ENCODE measurements at regions of chr15 and their contacts with region 1.

Region 1: GRCh38 chr15:59492389-59493377 is 54.7 kb downstream of the FAM81A start:
- DNase-seq: peak; percentile 55
- H3K4me3 ChIP-seq: no peak overlapping the region
- H3K27ac ChIP-seq: no peak overlapping the region
- H3K4me1 ChIP-seq: no peaks in the 10 kb centered on the region
- H3K27me3 ChIP-seq: no peaks in the 10 kb centered on the region
- CTCF ChIP-seq: peak; percentile 84 to 88

Region 2: DNA sequence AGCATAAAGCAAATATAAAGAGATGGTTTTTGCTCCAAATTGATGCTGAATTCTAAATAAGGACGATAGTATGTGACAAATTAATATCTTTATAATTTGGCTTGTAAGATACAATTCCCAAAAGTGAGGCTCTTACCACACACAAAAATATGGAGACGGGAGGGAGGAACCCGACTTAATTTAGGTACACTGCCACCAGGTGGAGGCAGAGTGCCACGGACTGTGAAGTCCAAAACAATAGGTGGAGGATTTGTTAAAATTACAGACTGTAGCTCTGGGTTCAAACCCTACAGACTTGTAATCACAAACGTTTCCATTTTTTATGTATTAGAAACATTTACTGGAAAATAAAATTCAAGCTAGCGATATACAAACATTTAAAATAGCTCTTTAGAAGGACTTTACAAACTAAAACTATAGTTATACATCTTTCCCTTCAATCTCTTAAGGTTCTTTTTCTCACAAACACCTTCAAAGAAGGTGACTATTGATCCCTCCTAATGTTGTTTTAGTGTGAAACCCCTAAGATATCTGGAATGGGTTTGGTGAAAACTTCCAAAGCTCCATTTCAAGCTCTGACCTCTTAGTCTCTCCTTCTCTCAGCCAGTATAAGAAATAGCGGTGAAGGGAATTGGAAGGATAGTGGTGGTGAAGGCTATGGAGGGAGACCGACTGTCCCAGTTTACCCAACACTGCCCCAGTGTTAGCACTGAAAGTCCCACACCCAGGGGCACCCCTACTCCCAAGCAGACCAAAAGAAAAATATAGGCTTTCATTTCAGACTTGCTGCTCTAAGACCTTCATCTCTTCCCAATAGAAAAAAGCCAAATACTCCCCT is 1264.8 kb before region 1 on chr15:
- CTCF ChIA-PET with region 1: no interaction called
- dilution Hi-C with region 1: no loop called
- in situ Hi-C with region 1: no loop called
- intact Hi-C with region 1: loop called (anchors 2 kb)
- DNase-seq: peak; percentile 57
- H3K4me3 ChIP-seq: no peak overlapping the region
- H3K27ac ChIP-seq: no peak overlapping the region
- H3K4me1 ChIP-seq: peaks cover 50% of the 10 kb centered on the region
- H3K27me3 ChIP-seq: no peaks in the 10 kb centered on the region
- CTCF ChIP-seq: peak; percentile 84 to 88

Region 3: DNA sequence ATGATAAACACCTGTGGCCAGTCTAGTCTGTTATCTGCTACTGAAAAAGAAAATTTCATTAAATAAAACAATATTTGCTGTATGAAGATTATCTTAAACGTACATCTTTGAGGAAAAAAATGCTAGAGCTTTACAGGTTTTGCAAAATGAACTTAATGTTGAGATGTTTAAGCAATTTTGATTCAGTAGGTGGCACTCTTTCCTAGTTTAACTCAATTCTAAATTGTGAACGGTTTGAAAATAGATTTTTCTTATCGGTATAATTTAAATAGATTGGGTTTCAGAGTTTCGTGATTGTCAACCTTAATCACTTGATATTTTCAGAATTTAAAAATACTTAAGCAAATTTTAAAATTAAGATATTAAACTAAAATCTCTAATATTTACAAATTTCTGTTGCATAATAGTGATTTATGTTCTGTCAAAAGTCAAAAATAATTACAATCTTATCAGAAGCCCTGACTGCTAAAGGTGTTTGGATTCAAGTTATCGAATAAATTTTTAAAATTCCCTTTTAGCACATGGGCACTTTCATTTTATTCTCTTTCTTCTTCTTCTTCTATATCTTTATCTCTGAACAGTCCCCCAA is 512.2 kb before region 1 on chr15:
- CTCF ChIA-PET with region 1: no interaction called
- dilution Hi-C with region 1: no loop called
- in situ Hi-C with region 1: loop called (anchors 10 kb)
- intact Hi-C with region 1: loop called (anchors 1 kb)
- DNase-seq: no peak
- H3K4me3 ChIP-seq: no peak overlapping the region
- H3K27ac ChIP-seq: no peak overlapping the region
- H3K4me1 ChIP-seq: no peaks in the 10 kb centered on the region
- H3K27me3 ChIP-seq: no peaks in the 10 kb centered on the region
- CTCF ChIP-seq: peak; percentile 32 to 50

Region 4: GRCh38 chr15:59104912-59105732 is 387.6 kb before region 1 on chr15 and contains the start of gene CCNB2:
- CTCF ChIA-PET with region 1: no interaction called
- dilution Hi-C with region 1: no loop called
- in situ Hi-C with region 1: loop called (anchors 10 to 25 kb)
- intact Hi-C with region 1: loop called (anchors 2 kb)
- DNase-seq: peak; percentile 92
- H3K4me3 ChIP-seq: peak within 1 kb of the TSS; percentile 81 to 90 (median 85)
- H3K27ac ChIP-seq: peak within 1 kb of the TSS; percentile 76
- H3K4me1 ChIP-seq: peaks cover 5% of the 10 kb centered on the region
- H3K27me3 ChIP-seq: no peaks in the 10 kb centered on the region
- CTCF ChIP-seq: no peak
- total RNA-seq, gene CCNB2: 2.8 to 37.4 TPM

Region 5: DNA sequence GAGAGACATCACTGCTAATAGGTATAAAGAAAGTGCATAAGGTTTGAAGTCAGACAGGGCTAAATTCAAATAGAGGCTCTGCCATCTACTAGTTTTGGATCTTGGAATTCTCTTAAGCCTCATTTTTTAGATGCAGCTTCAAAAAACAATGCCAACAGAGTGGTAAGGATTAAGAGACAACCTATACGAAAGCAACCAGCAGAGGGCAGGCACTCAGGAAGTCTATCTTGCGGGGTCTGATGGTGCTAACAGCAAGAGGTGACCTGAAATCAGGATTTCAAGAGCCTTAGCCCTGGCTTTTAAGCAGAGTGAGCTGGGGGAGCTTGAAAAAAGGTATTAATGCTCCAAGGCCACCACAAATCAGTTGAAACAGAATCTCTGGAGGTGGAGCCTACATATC is 245.3 kb before region 1 on chr15:
- CTCF ChIA-PET with region 1: no interaction called
- dilution Hi-C with region 1: no loop called
- in situ Hi-C with region 1: loop called in 1 of 2 experiments (anchors 25 kb)
- intact Hi-C with region 1: loop called (anchors 1 kb)
- DNase-seq: peak; percentile 35
- H3K4me3 ChIP-seq: no peak overlapping the region
- H3K27ac ChIP-seq: no peak overlapping the region
- H3K4me1 ChIP-seq: no peaks in the 10 kb centered on the region
- H3K27me3 ChIP-seq: no peaks in the 10 kb centered on the region
- CTCF ChIP-seq: peak; percentile 62 to 68

Region 6: GRCh38 chr15:59349680-59350420 is 142.8 kb before region 1 on chr15:
- CTCF ChIA-PET with region 1: no interaction called
- dilution Hi-C with region 1: no loop called
- in situ Hi-C with region 1: no loop called
- intact Hi-C with region 1: no loop called
- DNase-seq: peak; percentile 97
- H3K4me3 ChIP-seq: no peak overlapping the region
- H3K27ac ChIP-seq: peak overlapping the region; percentile 99
- H3K4me1 ChIP-seq: peaks cover 59% of the 10 kb centered on the region
- H3K27me3 ChIP-seq: no peaks in the 10 kb centered on the region
- CTCF ChIP-seq: no peak

Region 7: DNA sequence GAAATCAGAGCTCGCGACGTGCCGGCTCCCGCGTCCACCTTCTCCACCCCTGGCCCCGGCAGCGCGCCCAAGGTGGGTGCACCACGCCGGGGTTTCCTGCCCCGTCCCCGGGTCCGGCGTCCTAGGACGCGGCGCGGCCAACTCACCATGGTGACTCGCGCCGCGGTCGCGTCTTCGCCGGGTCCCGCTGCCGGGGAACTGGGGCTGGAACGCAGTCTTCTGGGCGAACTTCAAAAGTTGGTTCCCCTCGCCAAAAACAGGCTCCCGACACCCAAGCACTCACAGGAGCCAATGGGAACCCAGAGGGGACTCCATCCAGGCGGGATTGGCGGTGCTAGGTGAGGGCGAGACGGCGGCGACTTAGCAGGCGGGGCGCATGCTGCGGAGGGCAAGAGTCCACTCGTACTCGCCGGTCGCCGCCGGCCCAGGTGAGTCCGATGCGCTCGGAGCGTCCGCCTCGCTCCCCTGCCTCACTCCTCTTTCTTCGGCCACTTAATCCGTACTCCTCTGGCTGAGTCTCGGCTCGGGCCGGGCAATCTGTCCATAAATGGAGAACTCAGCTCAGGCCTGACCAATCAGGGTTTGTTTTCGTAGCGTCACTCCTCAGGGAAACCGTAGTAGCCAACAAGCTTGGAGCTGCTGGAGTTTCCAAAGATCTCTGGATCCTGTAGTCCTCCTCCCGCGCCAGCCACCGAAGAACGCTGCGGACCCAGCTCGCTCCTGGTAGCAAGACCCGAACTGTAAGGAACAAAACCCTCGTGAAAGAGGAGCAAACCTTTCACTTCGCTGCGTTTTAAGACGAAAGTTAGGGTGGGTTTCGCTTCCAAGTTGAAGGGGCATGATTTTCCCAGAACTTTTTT is 120.1 kb before region 1 on chr15 and contains the start of gene MYO1E:
- CTCF ChIA-PET with region 1: no interaction called
- dilution Hi-C with region 1: no loop called
- in situ Hi-C with region 1: loop called in 1 of 2 experiments (anchors 10 kb)
- intact Hi-C with region 1: loop called (anchors 1 kb)
- DNase-seq: peak; percentile 98
- H3K4me3 ChIP-seq: peak within 1 kb of the TSS; percentile 77 to 98 (median 90)
- H3K27ac ChIP-seq: peak within 1 kb of the TSS; percentile 95
- H3K4me1 ChIP-seq: peaks cover 27% of the 10 kb centered on the region
- H3K27me3 ChIP-seq: no peaks in the 10 kb centered on the region
- CTCF ChIP-seq: no peak
- total RNA-seq, gene MYO1E: 205 to 298 TPM

Region 8: GRCh38 chr15:59406446-59406845 is 86.2 kb before region 1 on chr15:
- CTCF ChIA-PET with region 1: no interaction called
- dilution Hi-C with region 1: no loop called
- in situ Hi-C with region 1: no loop called
- intact Hi-C with region 1: no loop called
- DNase-seq: no peak
- H3K4me3 ChIP-seq: no peak overlapping the region
- H3K27ac ChIP-seq: no peak overlapping the region
- H3K4me1 ChIP-seq: no peaks in the 10 kb centered on the region
- H3K27me3 ChIP-seq: no peaks in the 10 kb centered on the region
- CTCF ChIP-seq: no peak

Region 9: GRCh38 chr15:59594493-59594942 is 101.8 kb after region 1 on chr15:
- CTCF ChIA-PET with region 1: no interaction called
- dilution Hi-C with region 1: no loop called
- in situ Hi-C with region 1: no loop called
- intact Hi-C with region 1: no loop called
- DNase-seq: peak; percentile 76
- H3K4me3 ChIP-seq: no peak overlapping the region
- H3K27ac ChIP-seq: no peak overlapping the region
- H3K4me1 ChIP-seq: peaks cover 13% of the 10 kb centered on the region
- H3K27me3 ChIP-seq: no peaks in the 10 kb centered on the region
- CTCF ChIP-seq: no peak